ENCODE measurements at regions of chr16 and their contacts with region 1.

Region 1: GRCh38 chr16:53435066-53435688 is 906 bp downstream of the RBL2 start:
- DNase-seq: peak; percentile 91
- H3K4me3 Mint-ChIP-seq: peak overlapping the region; percentile 96
- H3K27ac Mint-ChIP-seq: peak overlapping the region; percentile 93
- H3K4me1 Mint-ChIP-seq: peaks cover 31% of the 10 kb centered on the region
- H3K27me3 Mint-ChIP-seq: no peaks in the 10 kb centered on the region

Region 2: GRCh38 chr16:53457670-53458069 is 22.5 kb after region 1 on chr16:
- intact Hi-C with region 1: loop called (anchors 1 kb)
- DNase-seq: peak; percentile 95
- H3K4me3 Mint-ChIP-seq: peak overlapping the region; percentile 79
- H3K27ac Mint-ChIP-seq: peak overlapping the region; percentile 88
- H3K4me1 Mint-ChIP-seq: peaks cover 73% of the 10 kb centered on the region
- H3K27me3 Mint-ChIP-seq: no peaks in the 10 kb centered on the region

Region 3: DNA sequence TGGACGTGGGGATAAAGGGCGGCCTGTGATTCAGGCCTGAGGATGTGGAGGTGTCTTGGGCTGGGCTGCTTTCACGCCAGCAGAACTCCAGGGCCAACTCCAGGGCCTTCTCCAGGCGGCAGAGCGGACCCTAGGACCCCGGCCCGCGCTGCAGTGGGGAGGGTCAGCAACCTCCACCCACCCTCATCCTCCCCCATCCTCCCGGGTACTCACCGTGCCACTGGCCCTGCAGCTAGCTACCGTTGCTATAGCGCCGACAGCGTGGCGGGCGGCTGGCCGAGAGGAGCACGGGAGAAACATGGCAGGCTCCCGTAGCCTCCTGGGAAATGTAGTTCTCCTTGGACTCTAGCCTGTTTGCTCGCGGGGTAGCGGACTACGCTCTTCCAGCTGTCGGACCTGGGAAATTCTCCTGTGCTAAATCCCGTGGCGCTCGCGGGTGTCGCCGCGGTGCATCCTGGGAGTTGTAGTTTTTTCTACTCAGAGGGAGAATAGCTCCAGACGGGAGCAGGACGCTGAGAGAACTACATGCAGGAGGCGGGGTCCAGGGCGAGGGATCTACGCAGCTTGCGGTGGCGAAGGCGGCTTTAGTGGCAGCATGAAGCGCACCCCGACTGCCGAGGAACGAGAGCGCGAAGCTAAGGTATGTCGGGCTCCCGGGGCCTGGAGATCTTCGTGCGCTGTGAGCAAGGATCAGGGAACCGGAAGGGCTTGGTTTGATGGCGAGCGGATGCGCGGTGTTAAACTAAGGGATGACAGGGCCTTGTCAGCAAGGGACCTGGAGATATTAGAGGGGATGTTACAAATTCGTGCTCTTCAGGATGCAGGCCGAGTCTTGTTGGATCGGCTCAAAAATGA is 268.6 kb after region 1 on chr16 and contains the starts of genes FTO and RPGRIP1L:
- intact Hi-C with region 1: loop called (anchors 1 kb)
- DNase-seq: peak; percentile 99
- H3K4me3 Mint-ChIP-seq: peak within 1 kb of the TSS; percentile 93
- H3K27ac Mint-ChIP-seq: peak within 1 kb of the TSS; percentile 92
- H3K4me1 Mint-ChIP-seq: peaks cover 16% of the 10 kb centered on the region
- H3K27me3 Mint-ChIP-seq: no peaks in the 10 kb centered on the region
- total RNA-seq, gene FTO: 60.8 and 61.1 TPM in 2 replicates
- total RNA-seq, gene RPGRIP1L: 9.9 and 10.0 TPM in 2 replicates